ENCODE measurements at regions of chr20 and their contacts with region 1.

Region 1: GRCh38 chr20:20261159-20261558 is 106.7 kb upstream of the INSM1 start:
- DNase-seq: no peak

Region 2: GRCh38 chr20:20199361-20200160 is 61.6 kb before region 1 on chr20:
- in situ Hi-C with region 1: loop called (anchors 5 kb)
- DNase-seq: peak; percentile 92

Measured in G401 (cell line).